Esophagus squamous epithelium (tissue), 5 donors: ENCODE measurements at regions of chr1 and their contacts with region 1.

Region 1: DNA sequence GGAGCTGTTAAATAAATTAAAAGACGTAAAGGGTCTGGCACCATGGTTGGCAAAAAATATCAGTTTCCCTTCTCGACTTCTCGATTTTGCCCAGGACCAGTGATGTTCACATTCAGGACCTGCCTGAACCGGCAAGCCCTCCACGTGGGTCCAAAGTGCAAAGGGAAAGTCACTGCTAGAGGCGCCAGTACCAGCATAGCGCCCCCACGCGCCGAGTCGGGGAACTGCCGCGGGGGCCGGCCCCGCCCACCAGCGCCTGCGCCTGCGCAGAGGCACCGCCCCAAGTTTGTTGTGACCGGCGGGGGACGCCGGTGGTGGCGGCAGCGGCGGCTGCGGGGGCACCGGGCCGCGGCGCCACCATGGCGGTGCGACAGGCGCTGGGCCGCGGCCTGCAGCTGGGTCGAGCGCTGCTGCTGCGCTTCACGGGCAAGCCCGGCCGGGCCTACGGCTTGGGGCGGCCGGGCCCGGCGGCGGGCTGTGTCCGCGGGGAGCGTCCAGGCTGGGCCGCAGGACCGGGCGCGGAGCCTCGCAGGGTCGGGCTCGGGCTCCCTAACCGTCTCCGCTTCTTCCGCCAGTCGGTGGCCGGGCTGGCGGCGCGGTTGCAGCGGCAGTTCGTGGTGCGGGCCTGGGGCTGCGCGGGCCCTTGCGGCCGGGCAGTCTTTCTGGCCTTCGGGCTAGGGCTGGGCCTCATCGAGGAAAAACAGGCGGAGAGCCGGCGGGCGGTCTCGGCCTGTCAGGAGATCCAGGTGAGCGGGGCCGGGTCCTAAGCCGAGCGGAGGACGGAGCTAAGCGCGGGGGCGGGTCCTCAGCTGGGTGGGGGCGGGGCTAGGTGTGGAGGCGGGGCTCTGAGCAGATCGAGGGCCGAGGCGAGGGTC is at the start of gene PINK1:
- DNase-seq: no peak
- H3K4me3 ChIP-seq: peak within 1 kb of the TSS; percentile 76 to 100 (median 82)
- H3K27ac ChIP-seq: peak within 1 kb of the TSS; percentile 88 to 98 (median 94)
- H3K4me1 ChIP-seq: peaks cover 10 to 35% (median 19%) of the 10 kb centered on the region in 3 donors
- H3K27me3 ChIP-seq: peaks cover 0 to 5% (median 0%) of the 10 kb centered on the region in 4 donors
- CTCF ChIP-seq: peak; percentile 92 to 100 (median 99)
- POLR2A ChIP-seq: peak in 3 of 4 donors; percentile 45 to 92 (median 87)
- total RNA-seq, gene PINK1: 55.0 to 110 (median 77.1) TPM

Region 2: DNA sequence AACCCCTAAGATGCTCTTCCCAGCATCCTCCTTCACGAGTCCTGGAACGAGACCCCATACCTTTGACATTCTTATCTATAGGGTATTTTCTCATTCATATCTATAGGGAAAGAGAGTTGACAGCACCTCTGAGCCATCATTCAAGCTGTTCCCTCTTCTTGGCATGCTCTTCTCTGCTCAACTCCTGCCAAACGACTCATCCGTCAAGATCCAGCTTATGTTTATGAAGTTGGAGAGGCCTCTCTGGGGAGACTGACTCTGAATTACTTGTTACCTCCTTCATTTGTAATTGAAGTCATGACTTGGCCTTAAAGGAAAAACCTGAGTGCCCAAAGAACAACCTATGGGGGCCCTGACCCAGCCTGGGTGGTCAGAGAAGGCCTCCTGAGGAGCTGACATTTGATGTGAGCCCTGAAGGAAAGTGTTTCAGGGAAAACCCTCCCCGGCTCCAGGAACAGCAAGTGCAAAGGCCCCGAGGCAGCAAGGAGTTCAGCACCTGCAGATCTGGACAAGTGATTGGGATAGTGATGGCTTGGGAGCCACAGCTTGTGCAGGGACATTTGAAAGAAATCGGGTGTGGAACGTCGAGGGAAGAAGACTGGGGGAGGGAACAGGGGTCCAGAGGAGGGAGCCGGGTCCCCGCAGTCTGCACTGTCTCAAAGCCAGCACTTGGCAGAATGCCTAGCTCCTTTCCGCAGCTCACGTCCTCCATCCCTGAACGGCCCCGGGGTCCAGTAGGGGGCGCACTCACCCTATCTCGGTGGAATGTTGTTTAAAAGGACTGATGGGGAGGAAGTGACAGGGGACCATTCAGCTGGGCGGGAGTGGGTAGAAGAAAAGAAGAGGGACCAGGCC is 58.5 kb before region 1 on chr1:
- intact Hi-C with region 1: loop called (anchors 10 kb)
- DNase-seq: no peak
- H3K4me3 ChIP-seq: no peak overlapping the region
- H3K27ac ChIP-seq: no peak overlapping the region
- H3K4me1 ChIP-seq: no peaks in the 10 kb centered on the region
- H3K27me3 ChIP-seq: peaks cover 0 to 48% (median 0%) of the 10 kb centered on the region in 4 donors
- CTCF ChIP-seq: peak; percentile 35 to 79 (median 56)
- POLR2A ChIP-seq: no peak

Region 3: GRCh38 chr1:20903437-20903836 is 270.0 kb after region 1 on chr1:
- intact Hi-C with region 1: no loop called
- DNase-seq: no peak
- H3K4me3 ChIP-seq: no peak overlapping the region
- H3K27ac ChIP-seq: no peak overlapping the region
- H3K4me1 ChIP-seq: no peaks in the 10 kb centered on the region
- H3K27me3 ChIP-seq: no peaks in the 10 kb centered on the region
- CTCF ChIP-seq: no peak
- POLR2A ChIP-seq: no peak